ENCODE measurements at regions of chr4 and their contacts with region 1.

Region 1: GRCh38 chr4:107757864-107758476 is 37.9 kb upstream of the PAPSS1 start:
- DNase-seq: no peak

Region 2: GRCh38 chr4:107913281-107913899 is 155.4 kb after region 1 on chr4:
- intact Hi-C with region 1: loop called (anchors 1 kb)
- DNase-seq: no peak

Region 3: GRCh38 chr4:108135549-108136209 is 377.7 kb after region 1 on chr4:
- intact Hi-C with region 1: no loop called
- DNase-seq: no peak

Measured in cardiac septum (tissue), 1 donor.